MCF 10A (cell line): ENCODE measurements at regions of chr15 and their contacts with region 1.

Region 1: DNA sequence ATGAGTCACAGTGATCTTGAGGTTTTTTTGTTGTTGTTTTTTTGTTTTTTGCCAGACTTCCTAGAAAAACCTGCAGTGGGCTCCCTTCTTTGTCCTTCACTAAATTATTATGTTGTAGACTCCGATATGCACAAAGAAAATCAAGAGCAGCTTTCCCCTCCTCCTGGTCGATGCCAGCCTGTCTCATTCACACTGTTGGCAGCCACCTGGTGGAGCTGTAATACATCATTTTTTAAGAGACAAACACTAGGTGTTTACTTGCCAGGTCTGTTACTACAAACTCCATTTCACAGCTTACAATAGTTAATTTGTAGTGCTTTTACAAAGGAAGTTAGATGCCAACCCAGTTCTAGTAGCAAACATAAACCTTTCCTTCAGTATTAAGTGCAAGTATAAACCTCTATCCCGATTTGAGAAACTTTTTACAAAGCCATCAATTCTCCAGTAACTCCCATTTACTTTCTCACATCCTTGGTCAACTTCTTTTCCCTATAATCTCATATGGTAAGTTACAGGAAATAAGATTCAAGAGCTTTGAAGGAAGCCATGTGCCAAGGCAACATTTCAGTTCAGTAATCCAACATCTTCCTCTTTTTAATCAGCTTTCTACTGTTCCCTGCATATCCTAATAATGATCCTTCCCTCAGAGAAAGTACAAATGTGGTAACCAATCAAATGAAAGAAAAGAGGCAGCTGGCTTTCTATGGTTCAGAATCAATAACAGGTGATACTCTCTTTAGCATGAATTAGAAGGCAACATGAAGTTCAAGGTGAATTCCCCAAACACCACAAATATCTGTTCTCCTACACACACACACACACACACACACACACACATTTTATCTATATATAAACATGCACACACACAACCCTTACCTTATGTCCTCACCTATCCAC is 14.0 kb downstream of the AAGAB start:
- DNase-seq: peak; percentile 57
- H3K4me3 Mint-ChIP-seq: no peak overlapping the region
- H3K27ac Mint-ChIP-seq: peak overlapping the region; percentile 51
- H3K4me1 Mint-ChIP-seq: peaks cover 31% of the 10 kb centered on the region
- H3K27me3 Mint-ChIP-seq: no peaks in the 10 kb centered on the region
- CTCF ChIP-seq: peak; percentile 38

Region 2: DNA sequence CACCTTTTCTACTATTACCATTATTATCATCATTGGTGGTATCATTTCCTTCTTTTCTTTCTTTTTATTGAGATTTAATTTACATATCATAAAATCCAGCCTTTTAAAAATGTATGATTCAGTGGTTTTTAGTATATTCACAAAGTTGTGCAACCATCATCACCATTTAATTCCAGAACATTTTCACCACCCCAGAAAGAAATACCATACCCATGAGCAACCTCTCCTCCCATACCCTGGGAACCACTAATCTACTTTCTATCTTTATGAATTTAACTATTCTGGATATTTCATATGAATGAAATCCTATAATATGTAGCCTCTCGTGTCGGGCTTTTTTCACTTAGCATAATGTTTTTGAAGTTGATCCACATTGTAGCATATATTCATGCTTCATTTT is 15.1 kb before region 1 on chr15:
- CTCF ChIA-PET with region 1: interaction called, 15 read pairs
- POLR2A ChIA-PET with region 1: interaction called, 17 read pairs
- intact Hi-C with region 1: no loop called
- DNase-seq: peak; percentile 52
- H3K4me3 Mint-ChIP-seq: peak overlapping the region; percentile 35
- H3K27ac Mint-ChIP-seq: no peak overlapping the region
- H3K4me1 Mint-ChIP-seq: peaks cover 13% of the 10 kb centered on the region
- H3K27me3 Mint-ChIP-seq: no peaks in the 10 kb centered on the region
- CTCF ChIP-seq: no peak

Region 3: GRCh38 chr15:67254238-67255175 is 14.0 kb after region 1 on chr15 and contains the starts of genes AAGAB and IQCH:
- CTCF ChIA-PET with region 1: interaction called, 6 read pairs
- POLR2A ChIA-PET with region 1: interaction called, 42 read pairs
- intact Hi-C with region 1: no loop called
- DNase-seq: peak; percentile 96
- H3K4me3 Mint-ChIP-seq: peak within 1 kb of the TSS; percentile 97
- H3K27ac Mint-ChIP-seq: peak within 1 kb of the TSS; percentile 99
- H3K4me1 Mint-ChIP-seq: peaks cover 19% of the 10 kb centered on the region
- H3K27me3 Mint-ChIP-seq: no peaks in the 10 kb centered on the region
- CTCF ChIP-seq: no peak
- total RNA-seq, gene AAGAB: 52.7 and 60.7 TPM in 2 replicates
- total RNA-seq, gene IQCH: 4.4 and 5.0 TPM in 2 replicates

Region 4: DNA sequence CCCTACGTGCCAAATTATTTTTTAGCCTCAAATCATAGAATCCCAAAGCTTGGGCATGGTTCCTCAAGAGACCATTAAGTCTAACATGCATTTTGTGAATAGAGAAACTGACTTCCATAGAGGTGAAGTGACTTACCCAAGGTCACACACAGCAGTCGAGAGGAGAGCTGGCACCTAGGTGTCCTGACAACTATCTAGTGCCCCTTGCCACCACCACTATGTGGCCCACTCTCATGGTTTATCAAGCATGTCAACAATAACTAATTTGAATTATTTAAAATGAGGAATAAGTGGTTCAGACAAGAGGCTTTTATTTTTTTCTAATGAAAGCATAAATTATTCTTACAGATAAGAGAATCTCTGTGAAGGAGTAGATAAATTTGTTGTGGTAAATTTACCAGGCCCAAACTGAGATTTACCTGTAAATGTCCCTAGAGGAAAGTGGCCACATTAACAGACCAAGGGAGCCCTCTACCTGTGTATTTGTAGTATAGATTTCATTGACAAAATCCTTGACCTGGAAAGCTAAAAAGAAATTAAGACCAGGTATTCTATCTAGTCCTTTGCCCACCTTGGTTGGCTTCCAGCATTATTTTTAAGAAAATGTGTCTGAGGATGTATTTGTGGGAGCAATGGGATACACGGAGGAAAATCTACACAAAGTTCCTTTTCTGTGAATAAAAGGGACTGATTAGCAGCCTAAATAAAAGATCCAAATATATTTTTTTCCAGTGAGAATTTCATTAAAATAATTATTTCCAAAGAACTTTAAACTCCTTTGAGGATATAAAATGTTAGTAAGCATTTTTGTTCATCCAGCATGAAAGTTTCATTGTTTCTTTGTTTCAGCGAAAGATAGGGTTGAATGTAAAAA is 63.2 kb after region 1 on chr15:
- CTCF ChIA-PET with region 1: interaction called, 22 read pairs
- POLR2A ChIA-PET with region 1: interaction called, 4 read pairs
- intact Hi-C with region 1: loop called (anchors 1 kb)
- DNase-seq: peak; percentile 63
- H3K4me3 Mint-ChIP-seq: no peak overlapping the region
- H3K27ac Mint-ChIP-seq: no peak overlapping the region
- H3K4me1 Mint-ChIP-seq: no peaks in the 10 kb centered on the region
- H3K27me3 Mint-ChIP-seq: no peaks in the 10 kb centered on the region
- CTCF ChIP-seq: peak; percentile 66

Region 5: GRCh38 chr15:67396114-67396513 is 155.6 kb after region 1 on chr15:
- CTCF ChIA-PET with region 1: no interaction called
- POLR2A ChIA-PET with region 1: no interaction called
- intact Hi-C with region 1: no loop called
- DNase-seq: no peak
- H3K4me3 Mint-ChIP-seq: no peak overlapping the region
- H3K27ac Mint-ChIP-seq: no peak overlapping the region
- H3K4me1 Mint-ChIP-seq: no peaks in the 10 kb centered on the region
- H3K27me3 Mint-ChIP-seq: no peaks in the 10 kb centered on the region
- CTCF ChIP-seq: no peak